Gastrocnemius medialis (tissue), 4 donors: ENCODE measurements at regions of chr9 and their contacts with region 1.

Region 1: GRCh38 chr9:137423004-137423874 is at the starts of genes EXD3 and NOXA1:
- DNase-seq: peak; percentile 85 to 90
- ATAC-seq: peak; percentile 89 to 92
- H3K4me3 ChIP-seq: peak within 1 kb of the TSS; percentile 74 to 91 (median 82)
- H3K27ac ChIP-seq: peak within 1 kb of the TSS; percentile 68 to 81 (median 78)
- H3K4me1 ChIP-seq: peaks cover 14 to 29% of the 10 kb centered on the region in 2 donors
- H3K27me3 ChIP-seq: no peaks in the 10 kb centered on the region
- CTCF ChIP-seq: peak; percentile 61 to 98 (median 96)
- POLR2A ChIP-seq: peak; percentile 56 to 66
- total RNA-seq, gene EXD3: 4.8 to 12.5 (median 6.4) TPM
- total RNA-seq, gene NOXA1: 0.41 to 2.5 (median 1.8) TPM

Region 2: DNA sequence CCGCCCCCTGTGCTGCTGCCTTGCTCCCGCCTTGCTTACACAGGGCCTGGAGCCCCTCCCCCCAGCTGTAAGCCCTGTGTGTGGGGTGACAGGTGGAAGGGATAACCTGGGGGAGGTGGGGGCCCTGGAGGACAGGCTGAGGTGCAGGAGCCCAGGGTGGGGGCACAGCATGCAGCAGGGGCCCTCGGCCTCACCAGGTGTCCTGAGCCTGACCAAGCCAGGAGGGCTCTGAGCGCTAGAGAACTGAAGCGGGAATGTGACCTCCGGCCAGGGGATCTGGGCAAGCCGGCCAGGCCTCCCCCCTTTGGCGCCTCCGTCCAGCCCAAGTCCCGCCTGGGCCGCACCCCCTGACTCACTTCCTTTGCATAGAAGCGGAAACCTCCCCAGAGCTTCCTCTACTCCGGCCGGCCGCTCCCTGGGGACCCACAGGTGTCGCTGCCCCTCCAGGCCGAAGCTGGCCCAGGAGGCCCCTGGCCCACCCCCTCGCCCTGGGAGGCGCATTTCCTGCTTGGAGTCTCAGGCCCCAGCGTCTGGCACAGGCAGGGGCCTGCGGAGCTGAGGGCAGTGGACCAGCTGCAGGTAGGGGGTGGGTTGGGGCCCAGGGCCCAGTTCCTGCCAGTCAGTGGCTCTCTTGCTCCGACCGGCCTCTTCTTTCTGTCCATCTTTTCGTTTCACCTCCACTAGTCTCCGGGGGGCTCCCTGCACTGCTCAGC is 145.8 kb before region 1 on chr9 and contains the start of gene TOR4A:
- in situ Hi-C with region 1: loop called in 3 of 4 experiments (anchors 25 kb)
- intact Hi-C with region 1: no loop called
- DNase-seq: peak; percentile 52 to 57
- ATAC-seq: peak; percentile 61 to 62
- H3K4me3 ChIP-seq: peak within 1 kb of the TSS; percentile 36 to 51 (median 49)
- H3K27ac ChIP-seq: peak within 1 kb of the TSS; percentile 68 to 83 (median 80)
- H3K4me1 ChIP-seq: peaks cover 17 to 21% of the 10 kb centered on the region in 2 donors
- H3K27me3 ChIP-seq: peaks cover 13 to 46% (median 20%) of the 10 kb centered on the region in 3 donors
- CTCF ChIP-seq: peak in 1 of 5 experiments; percentile 9
- POLR2A ChIP-seq: peak; percentile 19 to 47
- total RNA-seq, gene TOR4A: 1.2 to 2.8 (median 1.7) TPM

Region 3: DNA sequence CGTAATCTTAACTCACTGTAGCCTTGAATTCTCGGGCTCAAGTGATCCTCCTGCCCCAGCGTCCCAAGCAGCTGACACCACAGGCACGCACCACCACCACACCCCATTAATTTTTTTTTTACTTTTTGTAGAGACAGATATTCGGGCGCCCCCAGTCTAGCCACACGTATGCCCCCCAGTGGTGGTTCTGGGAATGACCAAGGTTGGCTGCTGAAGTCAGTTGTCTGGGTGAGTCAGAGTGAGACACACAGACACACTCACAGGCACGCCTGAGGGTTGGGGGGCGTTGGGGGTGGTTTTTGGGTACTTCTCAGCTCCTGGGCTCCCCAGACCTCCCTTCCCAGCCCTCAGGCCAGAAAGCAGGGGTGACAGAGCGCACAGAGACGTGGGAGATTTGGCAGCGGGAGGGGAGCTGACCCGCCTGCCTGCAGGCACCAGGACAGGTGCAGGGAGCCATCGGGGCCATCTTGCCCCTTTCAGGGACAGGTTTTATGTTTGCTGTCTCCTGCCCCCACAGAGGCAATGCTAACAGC is 22.1 kb after region 1 on chr9:
- in situ Hi-C with region 1: no loop called
- intact Hi-C with region 1: loop called (anchors 1 kb)
- DNase-seq: peak in 1 of 2 donors; percentile 67
- ATAC-seq: peak; percentile 76 to 83
- H3K4me3 ChIP-seq: no peak overlapping the region
- H3K27ac ChIP-seq: no peak overlapping the region
- H3K4me1 ChIP-seq: peaks cover 0 to 10% of the 10 kb centered on the region in 2 donors
- H3K27me3 ChIP-seq: peaks cover 8 to 28% (median 25%) of the 10 kb centered on the region in 3 donors
- CTCF ChIP-seq: peak; percentile 65 to 88 (median 76)
- POLR2A ChIP-seq: no peak

Region 4: DNA sequence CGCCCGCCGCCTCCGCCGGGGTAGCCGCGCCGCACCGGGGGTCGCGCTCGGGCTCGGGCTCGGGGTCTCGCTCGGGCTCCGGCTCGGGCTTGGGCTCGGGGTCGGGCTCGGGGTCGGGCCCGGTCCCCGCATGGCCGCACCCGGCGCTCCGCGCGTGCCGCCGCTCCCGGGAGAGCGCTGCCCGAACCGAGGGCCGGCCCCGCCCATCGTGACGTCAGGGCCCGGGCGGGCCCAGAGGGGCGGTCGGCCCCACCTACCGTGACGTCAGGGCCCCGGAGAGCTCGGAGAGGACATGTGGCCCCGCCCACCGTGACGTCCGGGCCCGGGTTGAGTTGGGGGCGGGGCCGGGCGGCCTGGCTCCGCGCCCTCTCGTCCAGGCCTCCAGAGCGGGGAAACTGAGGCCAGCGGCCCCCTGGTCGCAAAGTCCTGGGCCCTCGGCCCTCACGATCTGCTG is 35.9 kb after region 1 on chr9 and contains the start of gene NSMF:
- in situ Hi-C with region 1: no loop called
- intact Hi-C with region 1: loop called (anchors 1 kb)
- DNase-seq: peak; percentile 84 to 88
- ATAC-seq: peak; percentile 89 to 90
- H3K4me3 ChIP-seq: peak within 1 kb of the TSS; percentile 51 to 63 (median 54)
- H3K27ac ChIP-seq: peak within 1 kb of the TSS; percentile 41 to 72 (median 66)
- H3K4me1 ChIP-seq: peaks cover 10 to 11% of the 10 kb centered on the region in 2 donors
- H3K27me3 ChIP-seq: no peaks in the 10 kb centered on the region
- CTCF ChIP-seq: no peak
- POLR2A ChIP-seq: peak; percentile 75 to 80
- total RNA-seq, gene NSMF: 4.4 to 8.4 (median 7.1) TPM

Region 5: GRCh38 chr9:137551651-137552384 is 128.6 kb after region 1 on chr9 and contains the start of gene MRPL41:
- in situ Hi-C with region 1: no loop called
- intact Hi-C with region 1: loop called (anchors 1 kb)
- DNase-seq: peak; percentile 80 to 89
- ATAC-seq: peak; percentile 63 to 70
- H3K4me3 ChIP-seq: peak within 1 kb of the TSS; percentile 71 to 87 (median 76)
- H3K27ac ChIP-seq: peak within 1 kb of the TSS; percentile 95 to 99 (median 97)
- H3K4me1 ChIP-seq: peaks cover 30 to 36% of the 10 kb centered on the region in 2 donors
- H3K27me3 ChIP-seq: no peaks in the 10 kb centered on the region
- CTCF ChIP-seq: no peak
- POLR2A ChIP-seq: peak; percentile 88 to 96
- total RNA-seq, gene MRPL41: 107 to 137 (median 126) TPM